ENCODE measurements at regions of chr12 and their contacts with region 1.

Region 1: GRCh38 chr12:132921685-132922084 is 34.3 kb upstream of the CHFR start:
- DNase-seq: no peak
- ATAC-seq: no peak
- H3K4me3 ChIP-seq: no peak overlapping the region
- H3K27ac ChIP-seq: no peak overlapping the region
- H3K4me1 ChIP-seq: no peaks in the 10 kb centered on the region
- H3K27me3 ChIP-seq: no peaks in the 10 kb centered on the region
- CTCF ChIP-seq: no peak

Region 2: GRCh38 chr12:132529906-132530305 is 391.8 kb before region 1 on chr12:
- intact Hi-C with region 1: no loop called
- DNase-seq: no peak
- ATAC-seq: no peak
- H3K4me3 ChIP-seq: no peak overlapping the region
- H3K27ac ChIP-seq: no peak overlapping the region
- H3K4me1 ChIP-seq: no peaks in the 10 kb centered on the region
- H3K27me3 ChIP-seq: no peaks in the 10 kb centered on the region
- CTCF ChIP-seq: no peak

Region 3: DNA sequence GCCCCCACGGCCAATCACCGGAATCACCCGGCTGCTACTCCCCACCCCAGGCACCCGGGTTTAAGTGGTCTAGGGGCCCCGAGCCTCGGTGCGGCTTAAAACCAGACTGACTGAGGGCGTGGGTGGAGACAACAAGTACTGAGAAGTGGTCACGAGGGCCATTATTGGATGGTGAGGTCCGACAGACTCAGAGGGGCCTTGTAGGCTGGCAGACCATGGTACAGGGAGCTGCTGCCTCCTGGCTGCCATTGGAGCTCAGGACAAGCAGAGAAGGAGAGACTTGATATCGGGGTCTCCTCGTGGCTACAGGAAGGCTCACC is 377.6 kb before region 1 on chr12:
- intact Hi-C with region 1: no loop called
- DNase-seq: no peak
- ATAC-seq: no peak
- H3K4me3 ChIP-seq: no peak overlapping the region
- H3K27ac ChIP-seq: no peak overlapping the region
- H3K4me1 ChIP-seq: no peaks in the 10 kb centered on the region
- H3K27me3 ChIP-seq: no peaks in the 10 kb centered on the region
- CTCF ChIP-seq: no peak

Region 4: DNA sequence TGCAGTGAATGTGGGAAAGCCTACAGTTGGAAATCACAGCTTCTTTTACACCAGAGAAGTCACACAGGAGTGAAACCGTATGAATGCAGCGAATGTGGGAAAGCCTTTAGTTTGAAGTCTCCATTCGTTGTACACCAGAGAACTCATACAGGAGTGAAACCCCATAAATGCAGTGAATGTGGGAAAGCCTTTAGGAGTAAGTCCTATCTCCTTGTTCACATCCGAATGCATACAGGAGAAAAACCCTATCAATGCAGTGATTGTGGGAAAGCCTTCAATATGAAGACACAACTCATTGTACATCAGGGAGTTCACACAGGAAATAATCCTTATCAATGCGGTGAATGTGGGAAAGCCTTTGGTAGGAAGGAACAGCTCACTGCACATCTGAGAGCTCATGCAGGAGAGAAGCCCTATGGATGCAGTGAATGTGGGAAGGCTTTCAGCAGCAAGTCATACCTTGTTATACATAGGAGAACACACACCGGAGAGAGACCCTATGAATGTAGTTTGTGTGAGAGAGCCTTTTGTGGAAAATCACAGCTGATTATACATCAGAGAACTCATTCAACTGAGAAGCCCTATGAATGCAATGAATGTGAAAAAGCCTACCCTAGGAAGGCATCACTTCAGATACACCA is 89.1 kb after region 1 on chr12:
- intact Hi-C with region 1: no loop called
- DNase-seq: no peak
- ATAC-seq: no peak
- H3K4me3 ChIP-seq: no peak overlapping the region
- H3K27ac ChIP-seq: no peak overlapping the region
- H3K4me1 ChIP-seq: no peaks in the 10 kb centered on the region
- H3K27me3 ChIP-seq: no peaks in the 10 kb centered on the region
- CTCF ChIP-seq: no peak

Region 5: DNA sequence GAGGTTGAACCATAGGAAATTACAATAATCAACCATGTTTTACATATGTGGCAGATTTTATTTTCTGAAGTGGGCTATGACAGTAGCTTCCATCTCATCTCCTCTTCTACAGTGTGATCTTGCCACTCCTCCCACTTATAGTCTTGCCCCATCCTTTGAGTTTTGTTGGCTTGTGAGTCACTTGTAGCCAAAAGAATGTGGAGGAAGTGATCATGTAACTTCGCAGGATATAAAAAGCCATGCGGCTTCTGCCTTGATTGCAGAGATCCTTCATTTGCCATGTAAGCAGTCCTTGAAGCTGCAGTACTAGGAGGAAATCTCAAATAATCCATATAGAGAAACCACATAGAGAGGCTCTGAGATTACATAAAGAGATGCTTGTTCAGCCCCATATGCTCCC is 101.9 kb after region 1 on chr12:
- intact Hi-C with region 1: no loop called
- DNase-seq: no peak
- ATAC-seq: no peak
- H3K4me3 ChIP-seq: no peak overlapping the region
- H3K27ac ChIP-seq: no peak overlapping the region
- H3K4me1 ChIP-seq: no peaks in the 10 kb centered on the region
- H3K27me3 ChIP-seq: no peaks in the 10 kb centered on the region
- CTCF ChIP-seq: no peak

Region 6: GRCh38 chr12:133046698-133047097 is 125.0 kb after region 1 on chr12:
- intact Hi-C with region 1: loop called in 1 of 10 experiments (anchors 10 kb)
- DNase-seq: no peak
- ATAC-seq: no peak
- H3K4me3 ChIP-seq: no peak overlapping the region
- H3K27ac ChIP-seq: no peak overlapping the region
- H3K4me1 ChIP-seq: no peaks in the 10 kb centered on the region
- H3K27me3 ChIP-seq: no peaks in the 10 kb centered on the region
- CTCF ChIP-seq: no peak

Measured in heart right ventricle (tissue), 16 donors.